Common myeloid progenitor, CD34-positive (primary cell): ENCODE measurements at regions of chr11 and their contacts with region 1.

Region 1: GRCh38 chr11:75597636-75598035 is 35.6 kb downstream of the SERPINH1 start:
- DNase-seq: peak; percentile 22 to 41 (median 38)
- H3K4me3 ChIP-seq: no peak overlapping the region
- H3K27ac ChIP-seq: no peak overlapping the region
- H3K4me1 ChIP-seq: peaks cover 0 to 8% (median 5%) of the 10 kb centered on the region in 4 experiments
- H3K27me3 ChIP-seq: peaks cover 0 to 3% (median 0%) of the 10 kb centered on the region in 5 experiments

Region 2: DNA sequence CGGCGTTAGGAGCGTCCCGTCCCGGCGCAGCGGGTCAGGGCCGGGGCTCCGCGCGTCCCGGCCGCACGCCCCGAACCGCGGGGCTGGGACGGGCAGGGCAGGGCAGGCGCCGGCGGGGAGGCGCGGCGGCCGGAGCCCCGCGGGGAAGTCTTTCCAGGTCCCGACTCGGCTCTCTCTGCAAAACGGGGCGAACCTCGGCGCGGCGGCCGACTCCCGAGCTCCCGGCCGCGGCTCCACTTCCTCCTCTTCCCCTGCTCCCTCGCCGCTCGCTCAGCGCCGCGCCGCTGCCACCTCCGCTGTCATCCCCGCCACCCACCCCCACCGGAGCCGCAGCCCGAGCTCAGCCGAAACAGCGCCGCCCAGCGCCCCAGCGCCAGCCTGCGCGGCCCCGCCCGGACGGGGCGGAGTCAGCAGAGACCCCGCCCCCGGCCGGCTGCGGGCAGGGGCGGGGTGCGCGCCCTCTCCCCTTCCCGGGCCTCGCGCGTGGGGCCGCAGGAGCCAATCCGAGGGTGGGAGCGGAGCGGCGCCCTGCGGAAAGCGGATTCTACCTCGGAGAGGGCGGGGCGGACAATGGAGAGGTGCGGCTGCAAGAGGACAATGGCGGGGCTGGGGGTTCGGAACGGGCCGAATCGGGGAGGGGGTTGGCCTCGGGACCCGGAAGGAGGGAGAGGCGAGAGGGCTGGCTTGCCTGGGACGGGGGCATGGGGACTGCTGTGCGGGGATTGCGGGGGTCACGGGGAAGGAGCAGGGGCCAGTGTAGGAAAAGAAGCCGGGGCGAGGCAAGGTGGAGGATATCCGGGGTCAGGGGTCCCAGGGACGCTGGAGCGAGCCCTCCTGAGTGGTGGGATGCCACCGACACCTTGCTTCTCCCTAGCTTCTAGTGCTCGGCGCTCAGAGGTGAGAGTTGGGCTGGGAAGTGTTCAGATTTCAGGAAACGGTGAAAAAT is 71.8 kb before region 1 on chr11 and contains the start of gene GDPD5:
- CTCF ChIA-PET with region 1: no interaction called
- POLR2A ChIA-PET with region 1: no interaction called
- DNase-seq: peak; percentile 81 to 91 (median 91)
- H3K4me3 ChIP-seq: peak within 1 kb of the TSS; percentile 60 to 91 (median 76)
- H3K27ac ChIP-seq: no peak within 1 kb of the TSS
- H3K4me1 ChIP-seq: peaks cover 0 to 20% (median 17%) of the 10 kb centered on the region in 4 experiments
- H3K27me3 ChIP-seq: peaks cover 0 to 22% (median 11%) of the 10 kb centered on the region in 5 experiments

Region 3: DNA sequence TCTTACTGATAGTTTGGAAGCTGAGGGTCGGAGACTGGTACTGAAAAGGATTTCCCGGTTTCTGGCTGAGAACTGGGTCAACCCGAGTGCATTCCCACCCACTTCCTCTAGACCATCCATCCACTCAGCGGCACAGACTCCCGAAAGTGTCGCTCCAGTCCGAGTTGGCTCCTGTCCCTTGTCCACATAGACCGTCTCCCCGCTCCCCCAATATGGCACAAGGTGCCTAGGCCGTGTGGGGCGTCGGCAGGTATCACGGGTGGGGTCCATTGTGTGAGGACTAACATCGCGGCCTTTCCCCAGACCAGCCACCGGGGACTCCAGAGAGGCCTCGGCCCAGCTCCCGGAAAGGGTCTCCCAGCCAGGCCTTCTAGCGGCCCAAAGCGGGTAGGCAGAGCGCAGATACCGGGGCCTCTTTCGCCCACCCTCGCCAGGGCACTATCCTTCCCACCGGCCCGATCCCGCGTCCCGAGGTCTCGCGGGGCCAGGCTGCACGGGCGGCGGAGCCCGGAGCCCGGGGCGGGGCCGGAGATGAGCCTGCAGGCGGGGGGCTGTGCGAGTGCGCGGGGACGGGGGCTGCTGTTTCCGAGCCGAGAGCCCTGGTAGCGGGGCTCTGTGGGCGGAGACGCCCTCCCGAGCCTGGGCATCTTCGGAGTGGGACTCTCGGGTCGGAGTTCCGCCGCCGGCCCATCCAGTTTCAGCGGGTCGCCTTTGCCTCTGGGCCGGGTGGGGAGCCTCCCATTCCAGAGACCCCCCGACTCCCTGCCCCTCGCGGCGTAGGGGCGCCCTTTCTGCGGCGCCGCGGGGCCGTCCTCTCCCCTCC is 14.5 kb before region 1 on chr11:
- CTCF ChIA-PET with region 1: interaction called, 26 read pairs
- POLR2A ChIA-PET with region 1: no interaction called
- DNase-seq: peak; percentile 81 to 93 (median 86)
- H3K4me3 ChIP-seq: peak overlapping the region; percentile 50 to 81 (median 67)
- H3K27ac ChIP-seq: peak overlapping the region; percentile 80 to 88
- H3K4me1 ChIP-seq: peaks cover 2 to 24% (median 20%) of the 10 kb centered on the region in 4 experiments
- H3K27me3 ChIP-seq: no peaks in the 10 kb centered on the region

Region 4: DNA sequence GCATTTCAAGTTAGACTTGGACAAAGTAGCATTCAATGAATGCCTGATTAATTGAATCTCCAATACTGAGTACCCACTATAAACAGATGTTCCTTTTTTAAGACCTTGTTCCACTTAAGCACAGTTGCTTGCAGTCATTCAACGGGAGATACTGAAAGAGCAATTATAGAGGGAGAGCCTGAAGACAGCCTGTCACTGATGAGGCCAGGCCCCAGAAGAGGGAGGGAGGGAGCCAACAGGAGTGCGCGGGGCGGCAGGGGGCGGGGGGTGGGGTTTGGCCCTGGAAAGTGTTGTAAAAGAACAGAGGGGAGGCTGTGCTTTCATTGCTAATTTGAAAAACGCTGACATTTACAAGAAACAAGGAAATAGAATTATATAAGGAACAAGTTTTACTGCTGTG is 18.1 kb after region 1 on chr11:
- CTCF ChIA-PET with region 1: interaction called, 16 read pairs
- POLR2A ChIA-PET with region 1: no interaction called
- DNase-seq: no peak
- H3K4me3 ChIP-seq: no peak overlapping the region
- H3K27ac ChIP-seq: no peak overlapping the region
- H3K4me1 ChIP-seq: no peaks in the 10 kb centered on the region
- H3K27me3 ChIP-seq: no peaks in the 10 kb centered on the region